GM18951 (cell line): ENCODE measurements at regions of chr9 and their contacts with region 1.

Region 1: GRCh38 chr9:126490871-126491567 is 122.7 kb upstream of the LMX1B start:
- POLR2A ChIP-seq: no peak

Region 2: DNA sequence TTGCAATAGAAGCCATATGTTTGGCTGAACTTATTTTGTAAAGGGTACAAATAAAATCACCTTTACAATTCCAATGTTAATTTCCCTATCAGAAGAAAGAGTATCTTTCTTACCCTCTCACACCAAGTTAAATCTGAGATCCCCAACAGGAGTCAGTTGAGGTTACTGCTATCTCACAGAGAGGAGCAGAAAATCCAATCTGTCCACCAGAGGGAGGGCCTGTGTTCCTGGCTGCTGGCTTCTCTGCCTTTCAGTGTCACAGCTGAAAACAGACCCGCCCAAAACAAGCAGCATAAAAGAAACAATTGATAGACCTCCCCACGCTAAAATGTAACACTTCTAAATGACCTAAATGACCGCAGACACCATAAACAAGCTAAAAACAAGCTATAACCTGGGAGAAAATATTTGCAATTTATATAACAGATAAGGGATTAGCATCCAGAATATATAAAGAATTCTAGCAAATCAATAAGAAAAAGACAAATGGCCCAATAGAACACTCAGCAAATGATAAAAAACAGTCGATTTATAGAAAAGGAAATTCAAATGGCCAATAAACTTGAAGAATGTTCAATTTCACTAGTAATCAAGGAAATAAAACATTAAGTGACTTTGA is 188.9 kb before region 1 on chr9:
- in situ Hi-C with region 1: loop called (anchors 25 kb)
- POLR2A ChIP-seq: no peak